H1 (cell line): ENCODE measurements at regions of chr18 and their contacts with region 1.

Region 1: GRCh38 chr18:54444319-54444914 is 86.7 kb downstream of the C18orf54 start:
- DNase-seq: peak; percentile 58 to 81
- H3K4me3 ChIP-seq: no peak overlapping the region
- H3K27ac ChIP-seq: no peak overlapping the region
- H3K4me1 ChIP-seq: no peaks in the 10 kb centered on the region; a peak in 1 of 7 replicates
- H3K27me3 ChIP-seq: peaks cover 0 to 1% (median 0%) of the 10 kb centered on the region in 4 experiments; a peak in 1 of 7 replicates
- CTCF ChIP-seq: peak; percentile 73 to 95 (median 88)
- EP300 ChIP-seq: peak in 1 of 2 experiments; percentile 30; a peak in 1 of 3 replicates
- POLR2A ChIP-seq: no peak
- RAD21 ChIP-seq: peak; percentile 99 to 100

Region 2: DNA sequence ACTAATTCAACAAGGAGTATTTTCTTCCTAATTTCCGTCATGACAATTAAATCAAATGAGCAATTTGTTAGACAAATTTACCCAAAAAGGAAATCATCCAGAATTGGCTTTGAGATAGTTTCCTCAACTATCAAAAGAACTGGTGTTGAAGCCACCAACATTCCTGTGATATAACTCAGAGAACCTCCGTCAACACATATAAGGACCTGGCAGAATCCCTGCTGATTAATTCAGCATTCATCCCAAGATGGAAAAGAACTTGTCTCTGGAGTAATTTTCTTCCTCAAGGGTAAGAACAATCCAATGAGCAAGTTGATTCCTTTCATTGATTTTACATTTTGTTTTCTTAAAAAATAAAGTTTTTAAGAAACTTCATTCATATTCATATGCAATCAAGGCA is 282.0 kb before region 1 on chr18:
- CTCF ChIA-PET with region 1: no interaction called
- POLR2A ChIA-PET with region 1: no interaction called
- DNase-seq: no peak
- H3K4me3 ChIP-seq: no peak overlapping the region
- H3K27ac ChIP-seq: no peak overlapping the region
- H3K4me1 ChIP-seq: no peaks in the 10 kb centered on the region
- H3K27me3 ChIP-seq: no peaks in the 10 kb centered on the region
- CTCF ChIP-seq: no peak
- EP300 ChIP-seq: no peak
- POLR2A ChIP-seq: no peak
- RAD21 ChIP-seq: no peak

Region 3: GRCh38 chr18:54378057-54378456 is 66.4 kb before region 1 on chr18:
- CTCF ChIA-PET with region 1: no interaction called
- POLR2A ChIA-PET with region 1: no interaction called
- DNase-seq: no peak
- H3K4me3 ChIP-seq: no peak overlapping the region
- H3K27ac ChIP-seq: no peak overlapping the region
- H3K4me1 ChIP-seq: peaks cover 0 to 9% (median 1%) of the 10 kb centered on the region in 4 experiments; a peak in 3 of 7 replicates
- H3K27me3 ChIP-seq: no peaks in the 10 kb centered on the region
- CTCF ChIP-seq: no peak
- EP300 ChIP-seq: no peak
- POLR2A ChIP-seq: no peak
- RAD21 ChIP-seq: no peak

Region 4: GRCh38 chr18:54411781-54412180 is 32.6 kb before region 1 on chr18:
- CTCF ChIA-PET with region 1: interaction called, 11 read pairs
- POLR2A ChIA-PET with region 1: no interaction called
- DNase-seq: no peak
- H3K4me3 ChIP-seq: no peak overlapping the region
- H3K27ac ChIP-seq: no peak overlapping the region
- H3K4me1 ChIP-seq: no peaks in the 10 kb centered on the region
- H3K27me3 ChIP-seq: no peaks in the 10 kb centered on the region
- CTCF ChIP-seq: no peak
- EP300 ChIP-seq: no peak
- POLR2A ChIP-seq: no peak
- RAD21 ChIP-seq: no peak

Region 5: GRCh38 chr18:54423831-54424230 is 20.6 kb before region 1 on chr18:
- CTCF ChIA-PET with region 1: interaction called, 16 read pairs
- POLR2A ChIA-PET with region 1: no interaction called
- DNase-seq: no peak
- H3K4me3 ChIP-seq: no peak overlapping the region
- H3K27ac ChIP-seq: no peak overlapping the region
- H3K4me1 ChIP-seq: peaks cover 0 to 4% (median 0%) of the 10 kb centered on the region in 4 experiments; a peak in 1 of 7 replicates
- H3K27me3 ChIP-seq: no peaks in the 10 kb centered on the region
- CTCF ChIP-seq: no peak
- EP300 ChIP-seq: no peak
- POLR2A ChIP-seq: no peak
- RAD21 ChIP-seq: no peak

Region 6: GRCh38 chr18:54515149-54515548 is 70.7 kb after region 1 on chr18:
- CTCF ChIA-PET with region 1: no interaction called
- POLR2A ChIA-PET with region 1: no interaction called
- DNase-seq: no peak
- H3K4me3 ChIP-seq: no peak overlapping the region
- H3K27ac ChIP-seq: no peak overlapping the region
- H3K4me1 ChIP-seq: peaks cover 0 to 3% (median 0%) of the 10 kb centered on the region in 4 experiments; a peak in 2 of 7 replicates
- H3K27me3 ChIP-seq: no peaks in the 10 kb centered on the region
- CTCF ChIP-seq: no peak
- EP300 ChIP-seq: no peak
- POLR2A ChIP-seq: no peak
- RAD21 ChIP-seq: no peak

Region 7: GRCh38 chr18:54558609-54559585 is 114.5 kb after region 1 on chr18:
- CTCF ChIA-PET with region 1: interaction called, 10 read pairs
- POLR2A ChIA-PET with region 1: no interaction called
- DNase-seq: no peak
- H3K4me3 ChIP-seq: no peak overlapping the region
- H3K27ac ChIP-seq: no peak overlapping the region
- H3K4me1 ChIP-seq: peaks cover 0 to 3% (median 1%) of the 10 kb centered on the region in 4 experiments; a peak in 5 of 7 replicates
- H3K27me3 ChIP-seq: no peaks in the 10 kb centered on the region
- CTCF ChIP-seq: peak in 2 of 3 experiments; percentile 36 to 49; a peak in 2 of 4 replicates
- EP300 ChIP-seq: no peak
- POLR2A ChIP-seq: no peak
- RAD21 ChIP-seq: peak; percentile 59 to 61

Region 8: DNA sequence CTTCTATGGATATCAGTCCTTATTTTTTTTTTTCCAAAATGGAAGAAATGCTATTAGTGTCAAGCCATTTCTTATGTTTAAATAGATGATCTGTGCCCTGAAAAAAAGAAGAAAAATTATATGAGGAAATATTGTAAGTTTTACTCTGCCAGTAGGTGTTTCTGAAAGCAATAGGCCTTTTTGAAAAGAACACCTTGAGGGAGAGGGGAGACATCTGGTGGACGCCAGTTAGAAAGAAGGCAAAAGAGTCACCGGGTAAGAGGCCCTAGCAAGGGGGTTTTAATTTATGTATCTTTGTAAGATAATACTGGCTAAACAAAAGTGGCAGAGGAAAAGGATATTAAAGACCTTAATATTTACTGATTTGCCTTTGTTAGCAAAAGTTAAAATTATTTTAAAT is 202.8 kb after region 1 on chr18:
- CTCF ChIA-PET with region 1: interaction called, 21 read pairs
- POLR2A ChIA-PET with region 1: no interaction called
- DNase-seq: peak in 1 of 2 experiments; percentile 15
- H3K4me3 ChIP-seq: no peak overlapping the region
- H3K27ac ChIP-seq: no peak overlapping the region
- H3K4me1 ChIP-seq: no peaks in the 10 kb centered on the region
- H3K27me3 ChIP-seq: no peaks in the 10 kb centered on the region
- CTCF ChIP-seq: peak; percentile 8 to 79 (median 54)
- EP300 ChIP-seq: no peak
- POLR2A ChIP-seq: no peak
- RAD21 ChIP-seq: peak; percentile 88 to 90

Region 9: GRCh38 chr18:54671291-54671881 is 227.0 kb after region 1 on chr18:
- CTCF ChIA-PET with region 1: interaction called, 107 read pairs
- POLR2A ChIA-PET with region 1: no interaction called
- DNase-seq: no peak
- H3K4me3 ChIP-seq: no peak overlapping the region
- H3K27ac ChIP-seq: no peak overlapping the region
- H3K4me1 ChIP-seq: peaks cover 0 to 3% (median 0%) of the 10 kb centered on the region in 4 experiments; a peak in 1 of 7 replicates
- H3K27me3 ChIP-seq: no peaks in the 10 kb centered on the region
- CTCF ChIP-seq: peak in 1 of 3 experiments; percentile 34; a peak in 1 of 4 replicates
- EP300 ChIP-seq: no peak
- POLR2A ChIP-seq: no peak
- RAD21 ChIP-seq: peak; percentile 66 to 74

Region 10: GRCh38 chr18:54776282-54776977 is 332.0 kb after region 1 on chr18:
- CTCF ChIA-PET with region 1: no interaction called
- POLR2A ChIA-PET with region 1: no interaction called
- DNase-seq: no peak
- H3K4me3 ChIP-seq: no peak overlapping the region
- H3K27ac ChIP-seq: no peak overlapping the region
- H3K4me1 ChIP-seq: no peaks in the 10 kb centered on the region
- H3K27me3 ChIP-seq: no peaks in the 10 kb centered on the region
- CTCF ChIP-seq: no peak
- EP300 ChIP-seq: no peak
- POLR2A ChIP-seq: no peak
- RAD21 ChIP-seq: no peak